HepG2 (cell line): ENCODE measurements at regions of chr6 and their contacts with region 1.

Region 1: DNA sequence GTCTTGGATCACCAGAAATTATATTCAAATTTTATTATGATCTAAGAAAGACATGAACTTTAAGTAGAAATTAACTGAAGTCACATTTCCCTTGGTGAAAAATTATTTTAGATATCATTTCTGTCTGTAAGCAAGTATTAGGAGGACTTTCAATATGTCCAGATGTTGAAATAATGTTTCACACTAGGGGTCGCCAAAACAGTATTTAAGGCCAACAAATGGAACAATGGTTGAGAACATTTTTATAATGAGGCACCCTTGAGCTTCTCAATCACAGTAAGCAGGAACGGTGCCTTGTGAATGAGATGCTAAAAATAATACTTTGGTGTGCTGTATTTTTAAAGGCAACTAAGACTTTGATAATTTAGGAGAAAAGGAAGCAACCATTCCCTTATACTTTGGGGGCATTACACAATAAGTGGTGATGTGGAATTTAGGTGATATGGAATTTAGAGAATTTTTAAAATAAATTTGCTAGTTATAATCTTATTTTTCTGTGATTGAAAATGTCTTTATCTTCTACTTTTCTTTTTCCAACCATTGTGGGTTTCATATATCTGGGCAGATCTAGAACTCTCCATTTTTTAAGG is 9.6 kb upstream of the SF3B5 start:
- DNase-seq: peak; percentile 74
- ATAC-seq: peak; percentile 86
- H3K4me3 ChIP-seq: no peak overlapping the region
- H3K27ac ChIP-seq: no peak overlapping the region
- H3K4me1 ChIP-seq: no peaks in the 10 kb centered on the region
- H3K27me3 ChIP-seq: no peaks in the 10 kb centered on the region
- CTCF ChIP-seq: peak; percentile 84
- EP300 ChIP-seq: no peak
- POLR2A ChIP-seq: no peak
- RAD21 ChIP-seq: peak; percentile 71

Region 2: GRCh38 chr6:144482142-144482541 is 377.1 kb after region 1 on chr6:
- CTCF ChIA-PET with region 1: interaction called, 19 read pairs
- POLR2A ChIA-PET with region 1: no interaction called
- in situ Hi-C with region 1: loop called (anchors 5 kb)
- intact Hi-C with region 1: loop called (anchors 1 kb)
- DNase-seq: peak; percentile 69
- ATAC-seq: peak; percentile 80
- H3K4me3 ChIP-seq: no peak overlapping the region
- H3K27ac ChIP-seq: no peak overlapping the region
- H3K4me1 ChIP-seq: peaks cover 14% of the 10 kb centered on the region
- H3K27me3 ChIP-seq: no peaks in the 10 kb centered on the region
- CTCF ChIP-seq: peak; percentile 73
- EP300 ChIP-seq: no peak
- POLR2A ChIP-seq: no peak
- RAD21 ChIP-seq: no peak